ENCODE measurements at regions of chr18 and their contacts with region 1.

Region 1: DNA sequence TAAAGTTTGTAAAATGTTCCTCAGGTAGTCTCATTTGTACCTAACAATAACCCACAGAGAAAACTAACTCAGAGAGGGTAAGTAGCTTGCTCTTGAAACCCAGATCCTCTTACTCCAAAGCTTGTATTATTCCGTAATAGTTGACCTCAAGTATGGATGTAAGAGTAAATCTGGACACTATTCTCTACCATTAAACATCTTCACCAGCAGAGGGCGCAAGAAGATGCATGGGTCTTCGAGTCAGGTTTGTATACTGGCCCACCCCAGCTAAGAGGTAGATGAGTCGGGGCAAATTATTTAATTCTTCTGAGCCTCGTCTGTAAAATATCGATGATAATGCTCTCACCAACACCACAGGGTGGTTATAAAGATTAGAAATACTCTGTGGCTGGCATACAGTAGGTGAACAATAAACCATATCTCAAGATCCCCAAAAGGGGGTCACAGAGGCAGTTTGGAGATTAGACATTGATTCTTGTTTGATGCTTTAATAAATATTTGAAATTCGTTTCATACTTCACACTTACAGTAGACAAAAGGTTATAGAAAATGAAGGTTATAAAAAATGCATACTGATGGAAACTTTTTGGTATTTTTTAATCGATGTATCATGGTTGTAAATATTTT is 3.5 kb upstream of the CABLES1 start:
- DNase-seq: no peak
- ATAC-seq: no peak
- H3K4me3 ChIP-seq: no peak overlapping the region
- H3K27ac ChIP-seq: peak overlapping the region; percentile 97
- H3K4me1 ChIP-seq: peaks cover 40% of the 10 kb centered on the region
- H3K27me3 ChIP-seq: no peaks in the 10 kb centered on the region
- CTCF ChIP-seq: peak; percentile 90

Region 2: DNA sequence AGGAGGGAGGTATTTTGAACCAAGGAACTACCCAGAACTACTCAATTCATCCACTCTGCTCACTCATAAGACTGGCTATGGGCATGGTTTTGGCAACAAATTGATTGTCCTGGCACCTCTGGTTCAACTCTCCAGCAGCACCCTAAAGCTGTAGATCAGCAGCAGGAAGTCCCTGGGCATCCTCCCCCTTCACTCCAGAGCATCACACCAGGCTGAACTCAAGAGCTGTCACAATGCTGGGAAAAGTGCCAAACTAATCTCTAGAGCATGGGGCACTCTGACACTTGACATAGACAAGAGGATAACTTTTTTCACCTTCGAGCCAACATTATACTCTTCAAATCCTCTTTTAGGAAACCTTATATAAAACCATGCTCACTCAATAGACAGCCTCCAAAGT is 352.8 kb before region 1 on chr18:
- CTCF ChIA-PET with region 1: no interaction called
- POLR2A ChIA-PET with region 1: no interaction called
- in situ Hi-C with region 1: no loop called
- intact Hi-C with region 1: no loop called
- DNase-seq: no peak
- ATAC-seq: no peak
- H3K4me3 ChIP-seq: no peak overlapping the region
- H3K27ac ChIP-seq: no peak overlapping the region
- H3K4me1 ChIP-seq: no peaks in the 10 kb centered on the region
- H3K27me3 ChIP-seq: no peaks in the 10 kb centered on the region; the same call in 1 of the 2 replicates
- CTCF ChIP-seq: no peak

Region 3: GRCh38 chr18:22933206-22933957 is 198.4 kb before region 1 on chr18 and contains the start of gene RBBP8:
- CTCF ChIA-PET with region 1: no interaction called
- POLR2A ChIA-PET with region 1: interaction called, 18 read pairs
- in situ Hi-C with region 1: no loop called
- intact Hi-C with region 1: loop called (anchors 10 kb)
- DNase-seq: peak; percentile 42
- ATAC-seq: peak; percentile 97
- H3K4me3 ChIP-seq: peak within 1 kb of the TSS; percentile 88 to 89
- H3K27ac ChIP-seq: peak within 1 kb of the TSS; percentile 95
- H3K4me1 ChIP-seq: peaks cover 10% of the 10 kb centered on the region; the same call in 1 of the 2 replicates
- H3K27me3 ChIP-seq: no peaks in the 10 kb centered on the region
- CTCF ChIP-seq: no peak
- total RNA-seq, gene RBBP8: 62.8 TPM

Region 4: DNA sequence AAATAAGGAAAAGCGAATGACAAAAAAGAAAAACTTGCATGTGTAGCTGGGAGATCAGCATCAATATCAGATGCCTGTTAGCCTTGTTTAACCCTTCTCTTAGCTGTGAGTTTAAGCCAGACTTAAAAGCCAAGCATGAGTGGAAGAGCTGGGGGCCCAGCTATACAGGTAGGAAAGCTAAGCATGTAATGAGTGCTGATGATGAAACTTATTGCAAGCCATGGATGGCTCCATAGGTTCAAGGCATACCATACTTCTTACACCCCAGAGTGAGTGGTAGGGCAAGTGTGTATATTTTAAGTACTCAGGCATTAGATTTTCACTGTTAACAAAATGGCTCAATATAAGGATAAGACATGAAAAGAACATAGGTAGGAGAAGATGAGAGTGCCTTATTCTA is 170.7 kb before region 1 on chr18:
- CTCF ChIA-PET with region 1: no interaction called
- POLR2A ChIA-PET with region 1: no interaction called
- in situ Hi-C with region 1: no loop called
- intact Hi-C with region 1: no loop called
- DNase-seq: no peak
- ATAC-seq: no peak
- H3K4me3 ChIP-seq: no peak overlapping the region
- H3K27ac ChIP-seq: no peak overlapping the region; the same call in 1 of the 2 replicates
- H3K4me1 ChIP-seq: no peaks in the 10 kb centered on the region
- H3K27me3 ChIP-seq: no peaks in the 10 kb centered on the region
- CTCF ChIP-seq: no peak

Region 5: DNA sequence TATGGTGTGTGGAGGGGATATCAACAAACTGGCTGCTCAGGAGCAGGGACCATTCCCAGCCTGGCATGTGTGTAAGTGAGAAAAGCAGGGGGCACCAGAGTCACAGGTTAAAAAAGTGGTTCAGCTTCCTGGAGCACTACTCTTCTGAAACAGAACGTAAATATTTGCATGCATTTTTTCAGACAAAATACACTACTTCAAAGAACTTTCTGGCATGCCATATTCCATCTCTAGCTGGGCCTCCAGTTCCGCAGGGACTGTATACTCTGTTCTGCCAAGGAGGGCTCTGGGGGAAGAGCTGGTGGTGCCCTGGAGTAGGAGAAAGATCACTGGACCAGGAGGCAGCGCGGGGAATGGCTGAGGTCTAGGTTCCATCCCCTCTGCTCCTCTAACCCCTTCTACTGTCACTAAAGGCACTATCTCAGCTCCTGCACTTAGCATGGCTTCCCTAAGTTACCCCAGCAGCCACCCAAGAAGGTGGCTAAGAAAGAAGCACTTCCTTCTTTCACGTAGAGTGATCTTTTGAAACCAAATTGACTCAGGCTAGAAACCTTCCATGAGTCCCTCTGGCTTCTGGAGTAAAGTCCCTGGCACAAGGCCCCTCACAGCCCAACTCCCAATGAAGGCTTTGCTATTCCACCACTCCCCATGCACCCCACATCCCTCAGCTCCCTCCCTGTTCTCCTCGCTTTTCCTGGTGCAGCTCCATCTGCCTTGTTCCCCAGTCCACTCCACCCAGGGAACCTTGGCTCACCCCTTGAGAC is 54.1 kb before region 1 on chr18:
- CTCF ChIA-PET with region 1: interaction called, 3 read pairs
- POLR2A ChIA-PET with region 1: no interaction called
- in situ Hi-C with region 1: no loop called
- intact Hi-C with region 1: loop called (anchors 5 kb)
- DNase-seq: no peak
- ATAC-seq: peak; percentile 89
- H3K4me3 ChIP-seq: no peak overlapping the region
- H3K27ac ChIP-seq: peak overlapping the region; percentile 60; the same call in 1 of the 2 replicates
- H3K4me1 ChIP-seq: peaks cover 19% of the 10 kb centered on the region
- H3K27me3 ChIP-seq: no peaks in the 10 kb centered on the region
- CTCF ChIP-seq: no peak

Region 6: DNA sequence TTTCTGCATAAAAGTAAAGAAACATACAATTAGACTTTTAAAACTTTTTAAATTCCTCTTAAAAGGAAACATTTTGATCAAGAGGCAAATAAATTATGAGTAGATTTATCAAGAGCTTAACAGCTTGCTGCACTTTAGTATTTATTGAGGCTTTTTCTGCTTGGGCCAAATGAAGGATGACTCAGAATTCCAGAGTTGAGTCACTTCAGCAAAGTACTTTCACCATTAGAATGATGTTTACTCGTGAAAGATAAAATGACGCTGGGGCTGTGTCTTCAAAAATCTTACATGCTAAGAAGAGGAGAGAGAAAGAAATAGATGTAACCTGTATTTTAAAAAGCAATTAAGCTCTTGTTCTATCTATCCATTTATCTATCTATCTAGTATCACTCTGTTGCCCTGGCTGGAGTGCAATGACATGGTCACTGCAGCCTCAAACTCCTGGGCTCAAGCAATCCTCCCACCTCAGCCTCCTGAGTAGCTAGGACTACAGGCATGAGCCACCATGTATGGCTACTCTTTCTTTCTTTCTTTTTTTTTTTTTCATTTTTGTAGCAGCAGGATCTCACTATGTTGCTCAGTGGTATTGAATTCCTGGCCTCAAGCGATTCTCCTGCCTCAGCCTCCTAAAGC is 246.0 kb after region 1 on chr18:
- CTCF ChIA-PET with region 1: interaction called, 16 read pairs
- POLR2A ChIA-PET with region 1: interaction called, 21 read pairs
- in situ Hi-C with region 1: no loop called
- intact Hi-C with region 1: loop called (anchors 2 kb)
- DNase-seq: peak; percentile 42
- ATAC-seq: peak; percentile 65
- H3K4me3 ChIP-seq: no peak overlapping the region
- H3K27ac ChIP-seq: peak overlapping the region; percentile 78
- H3K4me1 ChIP-seq: peaks cover 42% of the 10 kb centered on the region
- H3K27me3 ChIP-seq: no peaks in the 10 kb centered on the region
- CTCF ChIP-seq: no peak

Region 7: DNA sequence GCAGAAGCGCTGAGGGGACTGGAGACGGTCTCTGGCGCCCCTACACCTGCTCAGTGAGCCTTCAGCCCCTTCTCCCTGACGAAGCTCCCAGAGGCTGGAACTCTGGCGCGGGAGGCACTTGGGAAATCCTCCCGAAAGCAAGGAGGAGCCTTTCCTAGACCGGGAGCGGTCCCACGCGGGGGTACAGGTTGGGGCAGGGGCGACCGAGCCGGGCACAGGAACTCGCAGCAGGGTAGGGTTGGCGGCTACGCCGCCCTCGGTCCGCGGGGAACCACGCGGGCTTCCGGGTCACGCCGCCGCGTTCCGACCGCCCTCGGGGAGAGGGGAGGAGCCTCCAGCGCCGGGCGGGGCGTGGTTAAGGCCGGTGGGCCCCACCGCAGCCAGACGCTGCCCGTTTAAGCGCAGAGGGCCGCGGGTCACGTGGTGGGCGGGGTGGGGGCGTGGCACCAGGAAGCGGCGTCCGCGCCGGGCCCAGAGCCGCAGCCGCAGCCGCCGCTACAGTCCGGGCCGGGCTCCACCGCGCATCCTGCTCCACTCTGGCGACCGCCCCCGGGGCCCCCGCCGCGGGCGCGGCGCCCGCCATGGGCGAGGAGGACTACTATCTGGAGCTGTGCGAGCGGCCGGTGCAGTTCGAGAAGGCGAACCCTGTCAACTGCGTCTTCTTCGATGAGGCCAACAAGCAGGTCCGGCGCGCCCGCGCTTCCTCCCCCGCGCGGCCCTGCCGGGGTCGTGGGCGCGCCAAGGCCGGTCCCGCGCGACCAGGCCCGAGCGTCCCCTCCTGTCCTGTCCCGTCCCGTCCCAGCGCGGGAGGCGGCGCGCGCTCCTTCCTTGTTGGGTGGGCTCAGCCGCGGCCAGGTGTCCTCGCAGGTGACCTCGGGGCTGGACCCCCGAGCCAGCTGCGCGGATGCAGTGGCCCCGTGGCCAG is 371.5 kb after region 1 on chr18 and contains the start of gene RMC1:
- CTCF ChIA-PET with region 1: no interaction called
- POLR2A ChIA-PET with region 1: no interaction called
- in situ Hi-C with region 1: no loop called
- intact Hi-C with region 1: loop called (anchors 5 kb)
- DNase-seq: no peak
- ATAC-seq: peak; percentile 94
- H3K4me3 ChIP-seq: peak within 1 kb of the TSS; percentile 81 to 90
- H3K27ac ChIP-seq: peak within 1 kb of the TSS; percentile 92
- H3K4me1 ChIP-seq: peaks cover 15% of the 10 kb centered on the region
- H3K27me3 ChIP-seq: no peaks in the 10 kb centered on the region
- CTCF ChIP-seq: peak; percentile 50; the same call in 1 of the 2 replicates
- total RNA-seq, gene RMC1: 57.4 TPM

Measured in Panc1 (cell line).